ENCODE measurements at regions of chr3 and their contacts with region 1.

Region 1: DNA sequence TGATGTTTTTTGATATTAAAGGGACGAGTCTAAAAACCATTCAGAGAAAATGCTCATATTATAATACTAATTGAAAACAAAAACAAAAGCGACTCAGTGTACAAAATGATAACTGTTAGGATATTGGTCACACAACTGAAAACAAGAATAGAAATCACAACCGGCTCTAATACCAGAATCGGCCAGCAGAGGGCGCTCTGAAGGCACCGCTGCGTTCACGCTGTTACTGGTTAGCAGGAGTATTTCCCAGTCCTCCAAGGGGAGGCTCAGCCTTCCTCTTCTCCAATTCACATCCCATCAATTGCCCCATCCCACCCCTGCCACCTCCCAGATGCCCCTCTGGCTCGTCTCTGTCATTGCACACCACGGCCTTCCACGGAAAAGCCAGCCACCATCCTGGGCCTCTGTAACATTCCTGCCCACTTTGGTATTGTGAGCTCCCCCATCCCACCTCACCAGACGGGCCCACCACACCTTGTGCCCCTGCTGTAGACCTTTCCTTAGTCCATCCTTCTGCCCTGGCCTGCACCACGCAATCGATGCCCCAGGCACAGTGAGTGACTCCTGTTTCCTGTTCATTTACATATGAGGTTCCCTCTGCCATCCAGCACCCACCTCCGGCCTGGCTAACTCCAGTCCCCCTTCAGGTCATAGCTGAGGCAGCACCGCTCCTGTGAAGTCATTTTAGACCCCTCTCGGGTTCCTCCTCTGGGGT is 8.5 kb downstream of the FAM107A start:
- DNase-seq: peak; percentile 62 to 81
- H3K4me3 ChIP-seq: no peak overlapping the region
- H3K4me3 Mint-ChIP-seq: no peak overlapping the region
- H3K27ac Mint-ChIP-seq: peak overlapping the region; percentile 38
- H3K4me1 ChIP-seq: peaks cover 20% of the 10 kb centered on the region
- H3K4me1 Mint-ChIP-seq: peaks cover 19% of the 10 kb centered on the region
- H3K27me3 ChIP-seq: no peaks in the 10 kb centered on the region
- H3K27me3 Mint-ChIP-seq: no peaks in the 10 kb centered on the region
- CTCF ChIP-seq: peak; percentile 74 to 92

Region 2: DNA sequence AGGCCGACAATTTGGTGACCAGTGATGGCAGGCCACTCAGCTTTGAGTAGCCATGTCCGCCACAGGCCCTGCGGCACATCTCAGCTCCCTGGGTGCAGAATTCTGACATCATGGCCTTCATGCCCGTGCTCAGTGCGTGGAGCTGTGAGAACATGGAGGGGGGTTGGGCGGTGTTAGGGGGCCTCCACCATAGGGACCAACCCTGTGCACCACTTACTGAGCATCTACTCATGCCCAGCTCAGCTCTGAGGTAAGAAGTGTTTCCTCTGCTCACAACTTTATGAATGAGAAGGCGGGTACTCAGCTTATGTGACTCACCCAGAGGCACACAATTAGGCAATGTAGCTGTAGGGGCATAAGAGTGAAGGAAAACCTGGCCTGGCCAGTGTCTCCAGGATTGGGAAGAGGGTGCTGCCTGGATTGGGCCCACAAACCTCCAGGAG is 42.2 kb before region 1 on chr3:
- CTCF ChIA-PET with region 1: interaction called, 4 read pairs
- POLR2A ChIA-PET with region 1: no interaction called
- intact Hi-C with region 1: loop called (anchors 5 kb)
- DNase-seq: peak in 1 of 2 experiments; percentile 46
- H3K4me3 ChIP-seq: no peak overlapping the region
- H3K4me3 Mint-ChIP-seq: no peak overlapping the region
- H3K27ac Mint-ChIP-seq: peak overlapping the region; percentile 27
- H3K4me1 ChIP-seq: peaks cover 25% of the 10 kb centered on the region
- H3K4me1 Mint-ChIP-seq: peaks cover 11% of the 10 kb centered on the region
- H3K27me3 ChIP-seq: no peaks in the 10 kb centered on the region
- H3K27me3 Mint-ChIP-seq: no peaks in the 10 kb centered on the region
- CTCF ChIP-seq: no peak

Region 3: DNA sequence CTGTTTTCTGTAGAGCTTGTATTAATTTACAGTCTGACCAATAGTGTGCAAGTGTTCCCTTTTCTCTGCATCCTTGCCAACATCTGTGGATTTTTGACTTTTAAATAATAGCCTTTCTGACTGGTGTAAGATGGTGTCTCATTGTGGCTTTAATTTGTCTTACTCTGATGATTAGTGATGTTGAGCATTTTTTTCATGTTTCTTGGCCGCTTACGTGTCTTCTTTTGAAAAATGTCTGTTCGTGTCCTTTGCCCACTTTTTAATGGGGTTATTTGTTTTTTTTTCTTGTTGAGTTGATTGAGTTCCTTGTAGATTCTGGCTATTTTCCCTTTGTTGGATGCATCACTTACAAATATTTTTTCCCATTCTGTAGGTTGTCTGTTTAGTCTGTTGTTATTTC is 24.2 kb before region 1 on chr3:
- CTCF ChIA-PET with region 1: no interaction called
- POLR2A ChIA-PET with region 1: no interaction called
- intact Hi-C with region 1: no loop called
- DNase-seq: no peak
- H3K4me3 ChIP-seq: no peak overlapping the region
- H3K4me3 Mint-ChIP-seq: no peak overlapping the region
- H3K27ac Mint-ChIP-seq: no peak overlapping the region
- H3K4me1 ChIP-seq: no peaks in the 10 kb centered on the region
- H3K4me1 Mint-ChIP-seq: peaks cover under 1% of the 10 kb centered on the region
- H3K27me3 ChIP-seq: no peaks in the 10 kb centered on the region
- H3K27me3 Mint-ChIP-seq: no peaks in the 10 kb centered on the region
- CTCF ChIP-seq: no peak

Region 4: GRCh38 chr3:58556761-58557221 is 11.9 kb before region 1 on chr3:
- CTCF ChIA-PET with region 1: no interaction called
- POLR2A ChIA-PET with region 1: no interaction called
- intact Hi-C with region 1: no loop called
- DNase-seq: no peak
- H3K4me3 ChIP-seq: no peak overlapping the region
- H3K4me3 Mint-ChIP-seq: no peak overlapping the region
- H3K27ac Mint-ChIP-seq: no peak overlapping the region
- H3K4me1 ChIP-seq: peaks cover 32% of the 10 kb centered on the region
- H3K4me1 Mint-ChIP-seq: peaks cover 26% of the 10 kb centered on the region
- H3K27me3 ChIP-seq: no peaks in the 10 kb centered on the region
- H3K27me3 Mint-ChIP-seq: no peaks in the 10 kb centered on the region
- CTCF ChIP-seq: no peak

Region 5: GRCh38 chr3:58585005-58585786 is 16.5 kb after region 1 on chr3:
- CTCF ChIA-PET with region 1: interaction called, 5 read pairs
- POLR2A ChIA-PET with region 1: no interaction called
- intact Hi-C with region 1: loop called (anchors 1 kb)
- DNase-seq: peak; percentile 75 to 83
- H3K4me3 ChIP-seq: peak overlapping the region; percentile 43
- H3K4me3 Mint-ChIP-seq: peak overlapping the region; percentile 82
- H3K27ac Mint-ChIP-seq: no peak overlapping the region
- H3K4me1 ChIP-seq: peaks cover 9% of the 10 kb centered on the region; the same call in 1 of the 2 replicates
- H3K4me1 Mint-ChIP-seq: peaks cover 9% of the 10 kb centered on the region
- H3K27me3 ChIP-seq: no peaks in the 10 kb centered on the region; the same call in none of the 2 replicates
- H3K27me3 Mint-ChIP-seq: peaks cover 5% of the 10 kb centered on the region
- CTCF ChIP-seq: peak; percentile 80 to 81

Region 6: GRCh38 chr3:58965865-58966264 is 397.1 kb after region 1 on chr3:
- CTCF ChIA-PET with region 1: no interaction called
- POLR2A ChIA-PET with region 1: no interaction called
- intact Hi-C with region 1: no loop called
- DNase-seq: no peak
- H3K4me3 ChIP-seq: no peak overlapping the region
- H3K4me3 Mint-ChIP-seq: no peak overlapping the region
- H3K27ac Mint-ChIP-seq: no peak overlapping the region
- H3K4me1 ChIP-seq: no peaks in the 10 kb centered on the region
- H3K4me1 Mint-ChIP-seq: no peaks in the 10 kb centered on the region
- H3K27me3 ChIP-seq: no peaks in the 10 kb centered on the region
- H3K27me3 Mint-ChIP-seq: peaks cover 5% of the 10 kb centered on the region
- CTCF ChIP-seq: no peak

Measured in Caco-2 (cell line).